Kidney (tissue), 22 donors: ENCODE measurements at regions of chr1 and their contacts with region 1.

Region 1: DNA sequence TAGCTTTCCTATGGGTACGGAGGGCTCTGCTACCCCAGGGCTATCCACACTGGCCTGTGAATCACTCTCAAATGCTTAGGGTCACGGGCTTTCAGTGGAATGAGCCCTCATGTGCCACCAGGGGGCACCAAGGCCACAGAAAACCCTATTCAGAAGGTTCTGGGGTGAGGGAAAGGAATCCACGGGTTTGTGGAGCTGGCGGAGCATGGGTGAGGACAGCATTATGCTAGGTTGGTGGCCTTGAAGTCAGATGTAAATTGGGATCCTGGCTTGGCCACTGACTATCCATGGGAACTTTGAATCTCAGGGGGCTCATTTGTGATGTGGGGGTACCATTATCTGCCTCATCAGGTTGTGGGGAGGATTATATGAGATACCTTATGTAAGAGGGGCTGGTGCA is 5.1 kb upstream of the LAMTOR5 start:
- DNase-seq: peak; percentile 62 to 82 (median 73)
- H3K4me3 ChIP-seq: no peak overlapping the region
- H3K27ac ChIP-seq: no peak overlapping the region
- H3K4me1 ChIP-seq: peaks cover 0 to 6% (median 2%) of the 10 kb centered on the region in 3 donors
- H3K27me3 ChIP-seq: no peaks in the 10 kb centered on the region
- CTCF ChIP-seq: peak; percentile 66

Region 2: DNA sequence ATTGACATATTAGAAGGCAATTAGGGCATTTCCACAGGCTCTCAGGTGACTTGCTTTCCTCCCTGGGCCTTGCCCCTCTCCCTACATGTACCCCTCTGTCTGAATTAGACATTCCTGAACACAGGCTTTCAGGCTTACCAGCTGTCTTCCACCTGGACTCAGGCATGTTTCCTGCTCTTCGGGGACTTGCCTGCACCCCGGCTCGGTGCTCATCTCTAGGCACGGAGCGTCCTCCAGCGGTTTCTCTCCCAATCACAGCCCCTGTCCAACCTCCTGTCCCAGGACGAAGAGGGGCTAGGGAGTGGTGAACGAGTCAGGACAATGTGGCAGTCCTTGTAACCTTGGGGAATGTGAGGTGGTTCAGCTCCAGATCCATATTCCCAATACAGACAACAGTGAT is 42.6 kb after region 1 on chr1:
- intact Hi-C with region 1: loop called (anchors 5 kb)
- DNase-seq: peak in 1 of 5 donors; percentile 8
- H3K4me3 ChIP-seq: no peak overlapping the region
- H3K27ac ChIP-seq: no peak overlapping the region
- H3K4me1 ChIP-seq: no peaks in the 10 kb centered on the region
- H3K27me3 ChIP-seq: no peaks in the 10 kb centered on the region
- CTCF ChIP-seq: no peak

Region 3: DNA sequence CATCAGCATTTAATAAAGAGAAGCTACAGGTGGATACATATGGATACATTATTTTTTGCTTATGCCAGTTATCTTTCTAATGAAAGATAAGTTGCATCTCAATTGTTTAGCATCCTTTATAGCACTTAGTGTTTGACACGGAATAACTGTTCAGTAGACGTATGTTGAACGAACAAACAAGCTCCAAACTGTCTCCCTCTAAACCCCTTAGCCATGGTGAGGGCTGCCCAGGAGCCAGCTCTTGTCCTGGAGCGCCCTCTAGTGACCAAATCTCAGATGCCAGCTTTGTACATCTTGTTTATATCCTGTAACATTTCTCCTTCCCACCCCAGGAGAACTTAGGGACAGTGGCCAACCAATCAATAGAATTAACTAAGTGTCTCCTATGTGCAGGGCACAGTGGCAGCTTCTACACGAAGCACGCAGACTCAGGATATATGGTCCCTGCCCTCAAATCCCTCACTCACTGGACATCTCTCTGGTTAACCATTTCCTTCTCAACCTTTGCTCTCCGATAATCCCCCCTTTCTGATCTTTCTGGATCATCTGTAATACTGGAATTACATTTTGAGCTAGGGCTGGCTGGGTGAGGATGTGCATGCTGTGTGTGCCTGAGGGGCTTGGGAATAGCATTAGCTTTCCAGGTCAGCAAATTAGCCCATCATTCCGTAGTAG is 83.5 kb after region 1 on chr1:
- intact Hi-C with region 1: no loop called
- DNase-seq: peak in 4 of 5 donors; percentile 82 to 88 (median 85)
- H3K4me3 ChIP-seq: no peak overlapping the region
- H3K27ac ChIP-seq: no peak overlapping the region
- H3K4me1 ChIP-seq: no peaks in the 10 kb centered on the region
- H3K27me3 ChIP-seq: no peaks in the 10 kb centered on the region
- CTCF ChIP-seq: peak; percentile 72